ENCODE measurements at regions of chr1 and their contacts with region 1.

Region 1: DNA sequence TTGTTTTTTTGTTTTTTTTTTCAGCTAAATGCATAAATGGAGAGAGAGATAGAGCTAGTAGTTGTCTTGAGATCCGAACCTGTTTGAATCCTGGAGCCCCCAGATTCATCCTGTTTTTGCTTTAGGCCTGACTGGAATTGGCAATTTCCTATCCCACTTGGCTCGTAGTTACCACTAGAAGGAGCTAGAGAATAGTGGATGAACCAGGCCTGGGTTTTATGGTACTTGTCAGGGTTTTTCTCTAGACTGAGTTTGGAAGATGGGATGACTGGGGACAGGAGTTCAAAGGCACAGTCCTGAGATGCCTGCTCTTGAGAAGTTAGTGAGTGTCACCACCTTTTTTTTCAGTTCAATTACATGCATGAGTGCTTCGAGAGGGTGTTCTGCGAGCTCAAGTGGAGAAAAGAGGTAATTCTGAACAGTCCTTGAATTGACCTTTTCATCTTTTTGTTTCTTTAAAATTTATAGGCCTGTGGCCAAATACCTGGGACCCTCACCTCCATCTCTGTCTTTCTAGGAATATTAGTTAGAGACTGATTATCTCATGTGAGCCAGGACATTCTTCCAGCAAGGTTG is 23.4 kb downstream of the CELF3 start:
- DNase-seq: no peak
- H3K4me3 ChIP-seq: no peak overlapping the region
- H3K27ac ChIP-seq: no peak overlapping the region
- H3K4me1 ChIP-seq: no peaks in the 10 kb centered on the region
- H3K27me3 ChIP-seq: no peaks in the 10 kb centered on the region
- CTCF ChIP-seq: peak; percentile 26 to 59 (median 54)
- EP300 ChIP-seq: no peak
- POLR2A ChIP-seq: no peak

Region 2: DNA sequence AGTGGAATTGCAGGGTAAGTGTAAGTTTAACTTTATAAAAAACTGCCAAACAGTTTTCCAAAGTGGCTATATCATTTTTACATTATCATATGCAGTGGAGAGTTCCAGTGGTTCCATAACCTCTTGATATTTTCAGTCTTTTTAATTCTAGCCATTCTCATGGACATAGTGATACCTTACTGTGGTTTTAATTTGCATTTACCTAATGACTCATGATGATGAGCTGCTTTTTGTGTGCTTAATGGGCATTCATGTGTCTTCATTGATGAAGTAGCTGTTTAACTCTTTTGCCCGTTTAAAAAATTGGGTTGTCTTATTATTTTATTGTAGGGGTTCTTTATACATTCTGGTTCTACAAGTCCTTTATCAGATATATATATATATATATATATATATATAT is 51.9 kb before region 1 on chr1:
- in situ Hi-C with region 1: no loop called
- intact Hi-C with region 1: loop called (anchors 2 kb)
- DNase-seq: no peak
- H3K4me3 ChIP-seq: no peak overlapping the region
- H3K27ac ChIP-seq: no peak overlapping the region
- H3K4me1 ChIP-seq: peaks cover 9 to 28% (median 26%) of the 10 kb centered on the region in 4 donors
- H3K27me3 ChIP-seq: no peaks in the 10 kb centered on the region
- CTCF ChIP-seq: no peak
- EP300 ChIP-seq: no peak
- POLR2A ChIP-seq: no peak